Motor neuron (in vitro differentiated cells): ENCODE measurements at regions of chr20 and their contacts with region 1.

Region 1: DNA sequence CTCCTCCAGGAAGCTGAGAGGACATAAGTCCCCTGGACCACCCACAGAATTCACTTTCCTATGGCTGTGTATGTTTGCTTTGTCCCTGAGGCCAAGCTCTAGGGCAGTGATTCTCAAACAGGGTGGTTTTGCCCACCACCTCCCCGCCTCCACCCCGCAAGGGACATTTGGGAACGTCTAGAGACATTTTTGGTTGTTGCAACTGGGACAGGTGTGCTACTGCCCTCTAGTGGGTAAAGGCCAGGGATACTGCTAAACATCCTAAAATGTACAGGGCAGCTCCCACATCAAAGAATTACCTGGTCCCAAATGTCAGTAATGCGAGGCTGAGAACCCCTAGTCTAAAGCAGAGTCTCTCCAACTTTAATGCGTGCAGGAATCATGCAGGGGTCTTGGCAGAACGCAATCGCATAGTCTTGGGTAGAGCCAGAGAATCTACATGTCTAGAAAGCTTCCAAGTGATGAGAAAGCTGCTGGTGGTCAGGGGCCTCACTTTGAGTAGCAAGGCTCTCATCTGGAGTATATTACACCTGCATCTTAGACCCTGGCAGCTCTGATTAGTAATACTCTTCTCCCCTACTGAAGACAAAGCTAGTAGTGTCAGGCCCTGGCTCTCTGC is 5.1 kb downstream of the KCNS1 start:
- ATAC-seq: peak in 5 of 8 experiments; percentile 27 to 68 (median 45)
- H3K4me3 ChIP-seq: no peak overlapping the region
- H3K27ac ChIP-seq: no peak overlapping the region
- H3K4me1 ChIP-seq: peaks cover 0 to 2% of the 10 kb centered on the region in 2 donors

Region 2: GRCh38 chr20:45044084-45044573 is 51.7 kb before region 1 on chr20:
- in situ Hi-C with region 1: loop called in 1 of 9 experiments (anchors 10 kb)
- ATAC-seq: peak in 6 of 8 experiments; percentile 42 to 90 (median 80)
- H3K4me3 ChIP-seq: no peak overlapping the region
- H3K27ac ChIP-seq: no peak overlapping the region
- H3K4me1 ChIP-seq: peaks cover 0 to 4% of the 10 kb centered on the region in 2 donors

Region 3: DNA sequence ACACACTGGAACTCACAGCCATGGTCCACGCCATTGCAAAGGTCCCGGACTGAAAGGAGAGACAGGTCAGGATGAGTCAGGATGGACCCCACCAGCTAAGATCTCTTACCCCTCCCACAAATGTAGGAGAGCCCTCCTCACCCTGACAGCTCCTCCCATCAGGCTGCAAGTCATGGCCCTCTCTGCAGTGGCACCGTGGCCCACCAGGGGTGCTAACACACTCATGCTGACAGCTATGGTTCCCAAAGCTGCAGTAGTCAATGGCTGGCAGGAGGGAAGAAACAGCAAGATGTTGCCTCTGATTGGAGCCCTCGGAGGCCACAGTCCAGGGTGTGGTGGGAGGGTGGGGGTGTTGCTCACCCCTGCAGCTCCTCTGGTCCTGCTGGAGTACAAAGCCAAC is 205.1 kb after region 1 on chr20:
- in situ Hi-C with region 1: loop called in 2 of 9 experiments (anchors 10 to 25 kb)
- ATAC-seq: peak; percentile 43 to 98 (median 66)
- H3K4me3 ChIP-seq: no peak overlapping the region
- H3K27ac ChIP-seq: no peak overlapping the region
- H3K4me1 ChIP-seq: no peaks in the 10 kb centered on the region